Naive thymus-derived CD8-positive, alpha-beta T cell (primary cell): ENCODE measurements at regions of chr1 and their contacts with region 1.

Region 1: GRCh38 chr1:185317034-185317885 is at the start of gene IVNS1ABP:
- DNase-seq: peak; percentile 89 to 97 (median 96)
- ATAC-seq: peak; percentile 76 to 78
- H3K4me3 Mint-ChIP-seq: peak within 1 kb of the TSS; percentile 91 to 99 (median 96)
- H3K27ac Mint-ChIP-seq: peak within 1 kb of the TSS; percentile 97 to 100 (median 99)
- H3K4me1 Mint-ChIP-seq: peaks cover 18 to 55% (median 52%) of the 10 kb centered on the region in 4 donors
- H3K27me3 Mint-ChIP-seq: no peaks in the 10 kb centered on the region
- polyA plus RNA-seq, gene IVNS1ABP: 44.8 to 55.1 (median 48.5) TPM

Region 2: DNA sequence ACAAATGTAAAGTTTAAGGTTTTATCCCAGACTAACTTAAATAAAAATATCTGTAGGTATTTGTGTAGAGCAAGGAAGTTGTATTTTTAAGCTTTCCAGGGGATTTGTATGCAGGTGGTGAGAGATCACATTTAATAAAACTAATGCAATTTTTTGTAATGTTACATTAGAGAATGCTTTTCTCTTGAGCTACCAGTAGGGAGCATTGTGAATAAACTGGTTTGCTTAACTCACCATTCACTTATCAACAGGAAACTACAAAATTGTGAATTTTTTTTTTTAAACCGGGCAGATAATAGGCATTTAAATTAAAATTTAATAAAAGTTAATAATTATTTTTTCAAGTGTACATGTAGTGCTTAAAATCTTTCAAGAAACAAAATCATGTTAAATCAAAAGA is 78.8 kb before region 1 on chr1:
- POLR2A ChIA-PET with region 1: interaction called, 54 read pairs
- DNase-seq: peak in 3 of 10 donors; percentile 25 to 43 (median 36)
- ATAC-seq: peak; percentile 47 to 65
- H3K4me3 Mint-ChIP-seq: peak overlapping the region in 6 of 10 donors; percentile 10 to 69 (median 32)
- H3K27ac Mint-ChIP-seq: peak overlapping the region in 2 of 10 donors; percentile 4 to 26
- H3K4me1 Mint-ChIP-seq: peaks cover 5 to 30% (median 27%) of the 10 kb centered on the region in 4 donors
- H3K27me3 Mint-ChIP-seq: no peaks in the 10 kb centered on the region

Region 3: DNA sequence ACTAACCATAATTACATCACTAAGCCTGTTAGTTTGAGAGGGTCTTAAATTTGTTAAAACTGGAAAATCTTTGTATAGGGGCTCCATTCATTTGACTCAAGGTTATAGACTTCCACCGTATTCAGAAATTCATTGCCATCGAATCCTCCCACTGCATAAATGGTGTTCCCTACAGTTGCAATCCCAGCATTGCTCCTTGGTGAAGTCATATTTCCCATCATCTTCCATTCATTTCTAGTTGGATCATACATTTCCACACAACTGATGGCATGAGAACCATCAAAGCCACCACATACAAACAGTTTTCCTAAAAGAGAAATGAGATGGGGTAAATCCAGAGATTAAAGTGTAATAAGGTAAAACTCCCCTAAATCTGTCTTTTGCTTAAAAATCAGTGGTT is 19.3 kb before region 1 on chr1:
- POLR2A ChIA-PET with region 1: interaction called, 10 read pairs
- DNase-seq: no peak
- ATAC-seq: no peak
- H3K4me3 Mint-ChIP-seq: no peak overlapping the region
- H3K27ac Mint-ChIP-seq: peak overlapping the region in 7 of 10 donors; percentile 2 to 75 (median 58)
- H3K4me1 Mint-ChIP-seq: peaks cover 0 to 13% (median 4%) of the 10 kb centered on the region in 4 donors
- H3K27me3 Mint-ChIP-seq: no peaks in the 10 kb centered on the region

Region 4: GRCh38 chr1:185483664-185484450 is 166.6 kb after region 1 on chr1:
- POLR2A ChIA-PET with region 1: no interaction called
- DNase-seq: no peak
- ATAC-seq: no peak
- H3K4me3 Mint-ChIP-seq: no peak overlapping the region
- H3K27ac Mint-ChIP-seq: peak overlapping the region in 1 of 10 donors; percentile 45
- H3K4me1 Mint-ChIP-seq: peaks cover 0 to 6% (median 3%) of the 10 kb centered on the region in 4 donors
- H3K27me3 Mint-ChIP-seq: no peaks in the 10 kb centered on the region

Region 5: DNA sequence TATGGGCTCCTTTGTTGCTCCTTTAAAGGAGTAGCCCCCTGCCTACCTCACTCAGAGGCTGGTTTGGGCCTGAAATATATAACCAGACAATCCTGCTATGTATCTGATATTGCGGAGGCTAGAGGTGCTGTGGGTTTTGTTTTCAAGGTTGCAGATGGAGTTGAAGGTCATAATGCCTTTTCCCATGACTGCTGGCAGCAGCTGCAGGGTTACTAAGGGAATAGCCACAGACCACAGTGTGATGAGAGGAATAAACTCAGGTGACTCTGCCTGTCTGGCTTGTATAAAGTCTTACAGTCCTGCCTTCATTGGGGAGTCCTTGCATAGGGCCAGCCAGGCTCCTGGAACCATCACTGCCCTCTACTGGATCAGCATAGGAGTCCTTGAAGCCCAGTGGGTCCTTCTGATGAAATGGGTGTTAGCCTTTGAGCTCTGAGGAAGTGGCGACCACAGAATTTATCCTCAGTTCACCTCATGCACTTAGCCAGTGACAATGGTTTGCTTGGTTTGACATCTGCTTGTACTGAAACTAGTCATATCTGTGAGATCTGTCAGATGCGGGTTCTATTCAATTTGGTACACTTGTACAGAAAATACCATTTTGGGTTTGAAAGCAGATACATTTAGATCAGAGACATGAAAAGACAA is 242.5 kb after region 1 on chr1:
- POLR2A ChIA-PET with region 1: interaction called, 16 read pairs
- DNase-seq: peak in 7 of 10 donors; percentile 8 to 54 (median 42)
- ATAC-seq: peak; percentile 72 to 74
- H3K4me3 Mint-ChIP-seq: peak overlapping the region in 9 of 10 donors; percentile 1 to 75 (median 49)
- H3K27ac Mint-ChIP-seq: peak overlapping the region; percentile 64 to 95 (median 84)
- H3K4me1 Mint-ChIP-seq: peaks cover 31 to 53% (median 46%) of the 10 kb centered on the region in 4 donors
- H3K27me3 Mint-ChIP-seq: no peaks in the 10 kb centered on the region

Region 6: DNA sequence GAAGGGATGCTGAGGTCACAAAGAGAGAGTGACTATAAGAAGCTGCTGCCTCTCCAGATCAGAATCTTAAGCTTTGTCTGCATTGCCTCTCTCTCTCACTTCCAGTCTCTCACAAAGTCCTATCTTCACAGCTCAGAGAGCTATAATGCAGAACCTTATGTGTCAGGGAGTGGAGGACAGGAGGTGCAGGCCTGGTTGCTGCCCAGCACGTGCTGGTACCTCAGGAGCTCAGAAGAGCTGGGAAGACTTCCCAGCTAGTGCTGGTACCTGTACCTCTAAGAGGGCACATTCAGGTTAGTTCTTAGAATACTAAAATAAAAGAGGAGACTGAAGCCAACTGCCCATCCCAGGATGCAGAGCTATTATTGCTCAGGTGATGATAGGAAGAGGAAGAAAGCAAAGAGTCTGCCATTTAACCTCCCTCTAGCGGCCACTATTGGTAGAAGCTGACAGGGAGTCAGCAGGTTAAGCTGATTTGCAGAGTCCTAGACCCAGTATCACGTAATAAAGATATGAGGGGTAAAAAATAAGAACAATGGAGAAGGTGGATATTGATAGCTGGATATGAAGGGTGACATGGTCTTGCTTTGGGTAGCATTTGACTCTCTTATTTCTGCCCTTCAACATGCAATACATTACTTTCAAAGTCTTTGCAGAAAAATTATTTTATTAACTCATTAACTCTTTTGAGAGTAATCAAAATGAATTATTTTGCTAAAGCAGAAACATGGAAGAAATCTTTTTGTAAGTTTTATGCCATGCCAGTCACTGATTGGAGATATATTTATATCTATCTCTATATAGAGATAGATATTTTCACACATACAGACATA is 278.8 kb after region 1 on chr1:
- POLR2A ChIA-PET with region 1: interaction called, 21 read pairs
- DNase-seq: peak in 9 of 10 donors; percentile 21 to 77 (median 44)
- ATAC-seq: peak; percentile 71 to 84
- H3K4me3 Mint-ChIP-seq: no peak overlapping the region
- H3K27ac Mint-ChIP-seq: peak overlapping the region in 8 of 10 donors; percentile 6 to 87 (median 36)
- H3K4me1 Mint-ChIP-seq: peaks cover 12 to 33% (median 24%) of the 10 kb centered on the region in 4 donors
- H3K27me3 Mint-ChIP-seq: no peaks in the 10 kb centered on the region

Region 7: GRCh38 chr1:185670187-185670627 is 352.9 kb after region 1 on chr1:
- POLR2A ChIA-PET with region 1: interaction called, 50 read pairs
- DNase-seq: peak; percentile 11 to 80 (median 63)
- ATAC-seq: peak; percentile 86 to 88
- H3K4me3 Mint-ChIP-seq: peak overlapping the region in 4 of 10 donors; percentile 1 to 35 (median 19)
- H3K27ac Mint-ChIP-seq: peak overlapping the region; percentile 49 to 92 (median 84)
- H3K4me1 Mint-ChIP-seq: peaks cover 8 to 38% (median 36%) of the 10 kb centered on the region in 4 donors
- H3K27me3 Mint-ChIP-seq: no peaks in the 10 kb centered on the region

Region 8: DNA sequence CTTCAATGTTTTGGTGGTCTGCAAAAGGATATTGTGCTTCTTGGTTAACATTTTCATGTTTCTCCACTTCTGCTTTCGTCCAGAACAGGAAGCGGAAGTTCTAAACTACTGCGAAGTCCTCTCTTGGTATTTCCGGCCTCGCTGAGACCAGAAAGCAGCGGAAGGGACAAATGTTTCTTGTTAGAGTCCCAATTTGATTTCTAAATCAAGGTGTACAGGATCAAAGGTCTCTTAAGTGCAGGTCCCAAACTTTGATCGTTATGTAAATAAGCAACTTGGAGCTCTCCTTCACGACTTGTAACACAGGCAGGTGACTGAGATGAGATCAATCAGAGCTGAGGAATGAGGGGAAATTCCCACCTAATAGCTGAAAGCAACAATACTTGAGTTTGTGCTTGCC is 376.8 kb after region 1 on chr1:
- POLR2A ChIA-PET with region 1: interaction called, 16 read pairs
- DNase-seq: peak in 6 of 10 donors; percentile 4 to 36 (median 28)
- ATAC-seq: peak; percentile 78
- H3K4me3 Mint-ChIP-seq: peak overlapping the region; percentile 73 to 86 (median 78)
- H3K27ac Mint-ChIP-seq: peak overlapping the region; percentile 84 to 99 (median 90)
- H3K4me1 Mint-ChIP-seq: peaks cover 10 to 28% (median 19%) of the 10 kb centered on the region in 4 donors
- H3K27me3 Mint-ChIP-seq: peaks cover 0 to 15% (median 1%) of the 10 kb centered on the region in 5 donors